Posterior cingulate gyrus (tissue), 11 donors: ENCODE measurements at regions of chr2 and their contacts with region 1.

Region 1: GRCh38 chr2:85420536-85421259 is 2.2 kb downstream of the SH2D6 start:
- DNase-seq: peak; percentile 80 to 98 (median 91)

Region 2: DNA sequence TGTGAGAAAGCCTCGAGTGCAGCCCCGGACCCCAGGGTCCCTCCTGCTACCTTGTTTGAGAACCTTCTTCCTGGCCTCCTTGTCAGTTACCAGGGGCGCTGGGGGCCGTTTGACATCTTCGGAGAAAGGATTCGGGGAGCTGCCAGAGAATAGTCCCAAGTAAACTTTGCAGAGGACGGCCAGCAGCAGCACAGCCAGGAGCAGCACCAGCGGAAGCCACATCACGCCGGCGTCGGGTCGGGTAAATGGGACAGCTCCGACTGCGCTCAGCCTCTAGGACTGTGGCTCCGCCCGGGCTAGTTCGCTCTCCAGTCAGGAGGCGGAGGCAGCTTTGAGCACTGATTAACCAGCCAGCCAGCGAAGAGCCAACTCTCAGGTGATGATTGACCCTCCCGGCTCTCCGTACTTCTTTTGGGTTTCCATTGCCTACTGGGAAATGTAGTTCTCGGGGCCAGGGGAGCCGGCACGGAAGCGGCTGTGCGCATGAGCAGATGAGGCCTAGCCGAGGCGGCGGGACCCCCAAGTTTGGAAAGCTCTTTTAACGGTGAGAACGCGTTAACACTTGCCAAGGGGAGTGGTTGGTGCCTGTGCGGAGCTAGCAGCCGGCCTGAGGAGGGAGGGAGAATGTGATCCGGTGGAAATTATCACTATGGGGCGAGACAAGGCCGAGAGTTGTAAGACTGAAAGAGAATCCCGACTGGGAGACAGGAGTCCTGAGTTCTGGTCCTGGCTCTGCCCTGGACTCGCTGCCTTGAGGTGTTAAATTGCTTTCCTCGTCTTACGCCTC is 66.2 kb before region 1 on chr2 and contains the starts of genes ELMOD3 and RETSAT:
- intact Hi-C with region 1: loop called (anchors 2 kb)
- DNase-seq: peak; percentile 91 to 99 (median 94)

Region 3: DNA sequence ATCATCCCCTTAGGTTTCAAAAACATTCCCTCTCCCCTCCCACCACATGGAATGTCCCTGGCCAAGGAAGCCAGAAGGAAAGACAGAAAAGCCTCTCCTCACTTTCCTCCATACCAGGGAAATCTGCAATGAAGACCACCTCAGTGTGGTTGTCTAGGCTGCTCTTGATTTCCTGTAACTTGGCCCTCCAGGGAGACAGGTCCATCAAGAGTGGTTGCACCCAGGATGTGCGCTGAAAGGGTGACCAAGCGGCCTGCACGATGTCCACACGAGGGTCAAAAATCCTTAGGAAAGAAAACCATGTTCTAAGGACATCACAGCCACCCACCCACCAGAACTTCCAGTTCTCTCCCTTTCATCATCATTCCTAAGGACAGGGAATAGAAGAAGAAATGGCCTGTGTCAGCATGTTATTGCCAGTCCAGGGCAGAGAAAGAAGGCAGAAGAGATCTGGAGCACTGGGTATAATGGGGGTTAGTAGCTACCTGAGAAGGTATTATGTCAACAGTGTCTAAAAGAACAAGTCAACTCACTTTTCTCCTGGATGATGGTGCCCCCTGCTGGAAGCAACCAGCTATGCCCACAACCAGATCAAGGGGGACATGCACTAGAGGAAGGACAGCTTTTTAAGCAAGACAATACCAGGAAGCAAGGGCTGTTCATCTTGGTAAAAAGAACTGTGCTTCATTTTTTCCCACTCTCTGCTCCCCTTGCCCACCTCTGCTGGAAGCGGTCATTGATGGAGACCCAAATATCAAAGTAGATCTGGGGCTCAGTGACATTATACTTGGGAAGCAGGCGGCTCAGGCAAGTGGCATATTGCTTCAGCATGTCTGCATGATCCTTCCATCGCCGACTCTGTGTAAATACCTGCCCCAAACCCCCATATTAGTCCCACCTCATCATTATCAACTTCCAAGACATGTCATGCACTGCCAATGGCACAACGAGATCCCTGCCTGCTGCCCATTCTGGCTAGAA is 131.3 kb after region 1 on chr2:
- intact Hi-C with region 1: loop called (anchors 1 kb)
- DNase-seq: peak; percentile 57 to 96 (median 89)